ENCODE measurements at regions of chr11 and their contacts with region 1.

Region 1: GRCh38 chr11:10592331-10592730 is 23.9 kb upstream of the LYVE1 start:
- DNase-seq: peak in 1 of 2 experiments; percentile 93
- H3K4me3 ChIP-seq: no peak overlapping the region
- H3K27ac ChIP-seq: peak overlapping the region; percentile 93
- H3K4me1 ChIP-seq: peaks cover 74% of the 10 kb centered on the region
- H3K27me3 ChIP-seq: no peaks in the 10 kb centered on the region
- CTCF ChIP-seq: no peak

Region 2: GRCh38 chr11:10455637-10456487 is 136.5 kb before region 1 on chr11:
- CTCF ChIA-PET with region 1: no interaction called
- POLR2A ChIA-PET with region 1: no interaction called
- intact Hi-C with region 1: no loop called
- DNase-seq: peak; percentile 43 to 62
- H3K4me3 ChIP-seq: peak overlapping the region; percentile 57
- H3K27ac ChIP-seq: peak overlapping the region; percentile 79
- H3K4me1 ChIP-seq: peaks cover 54% of the 10 kb centered on the region
- H3K27me3 ChIP-seq: no peaks in the 10 kb centered on the region
- CTCF ChIP-seq: no peak

Region 3: GRCh38 chr11:10526974-10527918 is 65.1 kb before region 1 on chr11:
- CTCF ChIA-PET with region 1: no interaction called
- POLR2A ChIA-PET with region 1: no interaction called
- intact Hi-C with region 1: loop called (anchors 5 kb)
- DNase-seq: peak in 1 of 2 experiments; percentile 63
- H3K4me3 ChIP-seq: no peak overlapping the region
- H3K27ac ChIP-seq: peak overlapping the region; percentile 15; the same call in 1 of the 2 replicates
- H3K4me1 ChIP-seq: peaks cover 26% of the 10 kb centered on the region
- H3K27me3 ChIP-seq: no peaks in the 10 kb centered on the region
- CTCF ChIP-seq: no peak

Region 4: GRCh38 chr11:10540923-10541560 is 51.3 kb before region 1 on chr11 and contains the start of gene RNF141:
- CTCF ChIA-PET with region 1: no interaction called
- POLR2A ChIA-PET with region 1: interaction called, 4 read pairs
- intact Hi-C with region 1: loop called (anchors 2 kb)
- DNase-seq: peak; percentile 74 to 93
- H3K4me3 ChIP-seq: peak within 1 kb of the TSS; percentile 89
- H3K27ac ChIP-seq: peak within 1 kb of the TSS; percentile 69
- H3K4me1 ChIP-seq: peaks cover 21% of the 10 kb centered on the region
- H3K27me3 ChIP-seq: no peaks in the 10 kb centered on the region
- CTCF ChIP-seq: peak; percentile 59; the same call in 1 of the 2 replicates
- total RNA-seq, gene RNF141: 33.7 and 36.8 TPM in 2 replicates

Region 5: GRCh38 chr11:10575346-10576034 is 16.8 kb before region 1 on chr11:
- CTCF ChIA-PET with region 1: interaction called, 3 read pairs
- POLR2A ChIA-PET with region 1: interaction called, 10 read pairs
- intact Hi-C with region 1: no loop called
- DNase-seq: no peak
- H3K4me3 ChIP-seq: no peak overlapping the region
- H3K27ac ChIP-seq: no peak overlapping the region
- H3K4me1 ChIP-seq: no peaks in the 10 kb centered on the region
- H3K27me3 ChIP-seq: no peaks in the 10 kb centered on the region
- CTCF ChIP-seq: no peak

Region 6: DNA sequence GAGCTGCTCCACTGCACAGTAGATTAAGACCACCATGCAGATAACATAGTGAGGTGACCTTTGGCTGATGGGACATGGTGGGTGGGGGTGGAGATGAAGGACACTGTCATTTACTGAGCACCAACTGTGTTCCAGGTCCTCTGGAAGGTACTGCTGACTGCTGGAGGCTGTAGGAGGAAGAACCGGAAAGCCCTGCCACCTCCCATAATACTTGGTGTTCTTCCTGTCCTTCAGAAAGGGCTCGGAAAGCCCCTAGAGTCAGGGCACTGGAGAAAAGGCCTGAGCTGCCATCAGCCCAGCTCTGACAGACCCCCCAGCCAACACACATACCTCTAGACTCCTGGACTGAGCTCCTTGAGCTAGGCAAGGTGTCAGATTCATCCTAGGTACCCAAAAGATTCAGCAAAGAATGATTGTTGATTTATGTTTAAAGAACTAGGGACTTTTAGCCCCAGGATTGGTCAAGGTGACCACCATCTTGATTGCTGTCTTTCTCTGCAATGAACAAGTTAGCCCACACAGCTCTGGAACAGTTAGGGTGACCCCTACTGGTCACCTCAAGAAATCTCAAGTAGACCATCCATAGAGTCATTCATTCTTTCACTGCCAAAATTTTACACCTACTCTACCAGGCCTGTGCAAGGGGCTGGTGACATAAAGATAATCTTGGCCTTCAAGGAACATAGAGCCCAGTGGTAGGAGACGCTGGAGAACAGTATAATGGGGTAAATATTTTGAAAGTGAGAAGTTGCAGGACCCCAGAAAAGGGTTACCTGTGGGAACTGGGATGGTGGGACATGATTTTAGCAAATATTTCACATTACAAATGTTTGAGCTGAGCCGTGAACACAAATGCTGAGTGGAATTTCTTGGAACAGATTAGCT is 61.8 kb after region 1 on chr11:
- CTCF ChIA-PET with region 1: no interaction called
- POLR2A ChIA-PET with region 1: no interaction called
- intact Hi-C with region 1: loop called (anchors 5 kb)
- DNase-seq: no peak
- H3K4me3 ChIP-seq: no peak overlapping the region
- H3K27ac ChIP-seq: peak overlapping the region; percentile 62; the same call in 1 of the 2 replicates
- H3K4me1 ChIP-seq: peaks cover 42% of the 10 kb centered on the region
- H3K27me3 ChIP-seq: no peaks in the 10 kb centered on the region
- CTCF ChIP-seq: peak; percentile 67

Measured in PC-9 (cell line).